Common myeloid progenitor, CD34-positive (primary cell): ENCODE measurements at regions of chr6 and their contacts with region 1.

Region 1: GRCh38 chr6:143015300-143015706 is 45.4 kb upstream of the AIG1 start:
- DNase-seq: no peak
- H3K4me3 ChIP-seq: no peak overlapping the region
- H3K27ac ChIP-seq: no peak overlapping the region
- H3K4me1 ChIP-seq: no peaks in the 10 kb centered on the region
- H3K27me3 ChIP-seq: no peaks in the 10 kb centered on the region

Region 2: DNA sequence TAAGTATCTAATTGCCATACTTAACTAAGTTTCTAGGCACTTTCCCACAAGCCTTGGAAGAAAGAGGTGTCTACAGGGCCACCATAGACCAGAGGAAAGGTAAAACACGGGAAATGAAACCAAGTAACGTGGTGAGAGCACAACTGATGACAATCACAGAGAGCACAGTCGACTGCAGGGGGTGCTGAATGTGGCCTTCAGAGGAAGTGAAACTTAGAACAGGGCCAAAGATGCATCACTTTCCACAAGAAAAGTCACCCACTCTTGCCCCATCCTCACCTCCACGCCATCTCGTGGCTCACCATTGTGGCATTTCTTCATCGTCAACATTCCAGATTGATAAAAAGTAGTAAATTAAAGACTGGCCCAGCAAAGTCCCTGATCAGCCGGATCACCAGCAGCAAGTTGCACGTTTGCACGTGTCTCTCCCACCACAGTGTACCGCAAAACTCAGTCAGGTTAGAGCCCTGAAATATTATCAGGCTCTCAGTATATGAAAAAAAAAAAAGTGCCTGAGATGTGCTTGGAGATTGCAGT is 101.7 kb before region 1 on chr6:
- CTCF ChIA-PET with region 1: no interaction called
- POLR2A ChIA-PET with region 1: no interaction called
- DNase-seq: peak in 2 of 3 donors; percentile 19 to 50
- H3K4me3 ChIP-seq: no peak overlapping the region
- H3K27ac ChIP-seq: no peak overlapping the region
- H3K4me1 ChIP-seq: no peaks in the 10 kb centered on the region
- H3K27me3 ChIP-seq: no peaks in the 10 kb centered on the region

Region 3: GRCh38 chr6:143026696-143027449 is 11.6 kb after region 1 on chr6:
- CTCF ChIA-PET with region 1: interaction called, 14 read pairs
- POLR2A ChIA-PET with region 1: no interaction called
- DNase-seq: peak; percentile 48 to 67 (median 64)
- H3K4me3 ChIP-seq: no peak overlapping the region
- H3K27ac ChIP-seq: no peak overlapping the region
- H3K4me1 ChIP-seq: no peaks in the 10 kb centered on the region
- H3K27me3 ChIP-seq: no peaks in the 10 kb centered on the region